CD8-positive, alpha-beta T cell (primary cell): ENCODE measurements at regions of chr5 and their contacts with region 1.

Region 1: GRCh38 chr5:151164686-151165392 is 7.3 kb upstream of the ANXA6 start:
- DNase-seq: peak; percentile 62 to 90 (median 81)
- ATAC-seq: peak; percentile 96
- H3K4me3 ChIP-seq: no peak overlapping the region
- H3K4me3 Mint-ChIP-seq: no peak overlapping the region
- H3K27ac ChIP-seq: no peak overlapping the region
- H3K27ac Mint-ChIP-seq: no peak overlapping the region
- H3K4me1 ChIP-seq: peaks cover 10% of the 10 kb centered on the region
- H3K4me1 Mint-ChIP-seq: peaks cover 30% of the 10 kb centered on the region
- H3K27me3 ChIP-seq: no peaks in the 10 kb centered on the region
- H3K27me3 Mint-ChIP-seq: no peaks in the 10 kb centered on the region
- CTCF ChIP-seq: peak; percentile 92

Region 2: GRCh38 chr5:151037561-151038411 is 127.1 kb before region 1 on chr5:
- CTCF ChIA-PET with region 1: interaction called, 11 read pairs
- POLR2A ChIA-PET with region 1: no interaction called
- intact Hi-C with region 1: no loop called
- DNase-seq: no peak
- ATAC-seq: no peak
- H3K4me3 ChIP-seq: no peak overlapping the region
- H3K4me3 Mint-ChIP-seq: no peak overlapping the region
- H3K27ac ChIP-seq: no peak overlapping the region
- H3K27ac Mint-ChIP-seq: no peak overlapping the region
- H3K4me1 ChIP-seq: no peaks in the 10 kb centered on the region
- H3K4me1 Mint-ChIP-seq: no peaks in the 10 kb centered on the region
- H3K27me3 ChIP-seq: no peaks in the 10 kb centered on the region
- H3K27me3 Mint-ChIP-seq: no peaks in the 10 kb centered on the region
- CTCF ChIP-seq: no peak

Region 3: GRCh38 chr5:151126199-151126645 is 38.6 kb before region 1 on chr5:
- CTCF ChIA-PET with region 1: interaction called, 1,723 read pairs
- POLR2A ChIA-PET with region 1: interaction called, 25 read pairs
- intact Hi-C with region 1: loop called (anchors 1 kb)
- DNase-seq: peak; percentile 34 to 82 (median 66)
- ATAC-seq: peak; percentile 37
- H3K4me3 ChIP-seq: no peak overlapping the region
- H3K4me3 Mint-ChIP-seq: no peak overlapping the region
- H3K27ac ChIP-seq: peak overlapping the region; percentile 12 to 54
- H3K27ac Mint-ChIP-seq: peak overlapping the region; percentile 92
- H3K4me1 ChIP-seq: peaks cover 41% of the 10 kb centered on the region
- H3K4me1 Mint-ChIP-seq: peaks cover 54% of the 10 kb centered on the region
- H3K27me3 ChIP-seq: no peaks in the 10 kb centered on the region
- H3K27me3 Mint-ChIP-seq: no peaks in the 10 kb centered on the region
- CTCF ChIP-seq: peak; percentile 78

Region 4: GRCh38 chr5:151183451-151184245 is 18.8 kb after region 1 on chr5:
- CTCF ChIA-PET with region 1: interaction called, 11 read pairs
- POLR2A ChIA-PET with region 1: interaction called, 3 read pairs
- intact Hi-C with region 1: no loop called
- DNase-seq: no peak
- ATAC-seq: no peak
- H3K4me3 ChIP-seq: no peak overlapping the region
- H3K4me3 Mint-ChIP-seq: no peak overlapping the region
- H3K27ac ChIP-seq: no peak overlapping the region
- H3K27ac Mint-ChIP-seq: peak overlapping the region; percentile 14
- H3K4me1 ChIP-seq: no peaks in the 10 kb centered on the region
- H3K4me1 Mint-ChIP-seq: peaks cover 23% of the 10 kb centered on the region
- H3K27me3 ChIP-seq: no peaks in the 10 kb centered on the region
- H3K27me3 Mint-ChIP-seq: no peaks in the 10 kb centered on the region
- CTCF ChIP-seq: no peak

Region 5: DNA sequence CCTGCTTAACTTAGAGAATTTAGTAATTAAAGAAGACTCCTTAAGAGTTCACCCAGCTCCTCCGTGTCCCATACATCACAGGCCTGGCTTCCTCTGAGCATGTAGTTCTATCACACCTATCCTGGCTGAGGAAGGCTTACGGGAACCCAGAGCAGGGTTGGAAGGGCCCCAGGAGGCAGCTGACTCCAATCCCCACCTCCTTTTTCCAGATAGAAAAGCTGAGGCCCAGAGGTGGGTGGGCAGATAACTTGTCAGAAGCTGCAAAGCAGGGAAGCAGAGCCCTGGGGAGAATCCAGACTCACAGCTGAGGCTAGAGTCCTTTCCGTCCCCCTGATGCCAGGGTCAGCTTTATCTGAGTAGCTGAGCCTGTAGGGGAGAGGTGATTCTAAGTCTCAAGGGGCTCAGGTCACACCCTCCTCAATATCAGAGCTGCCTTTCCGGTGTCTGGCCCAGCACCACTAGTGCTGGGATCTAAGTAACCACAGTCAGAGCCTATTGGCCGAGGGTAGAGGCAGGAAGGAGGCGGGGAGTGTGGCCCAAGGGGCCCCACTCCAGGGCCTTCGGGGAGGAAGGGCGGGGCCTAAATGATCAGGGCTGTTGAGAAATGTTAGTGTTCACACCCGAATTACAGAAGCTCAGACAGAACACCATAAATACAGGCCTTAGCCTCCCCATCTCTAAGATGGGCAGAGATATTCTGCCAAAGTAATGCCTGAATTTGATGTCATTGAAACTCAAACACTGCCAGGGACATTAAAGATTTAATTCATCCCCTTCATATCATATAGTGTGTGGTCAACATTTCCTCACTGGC is 49.2 kb after region 1 on chr5:
- CTCF ChIA-PET with region 1: interaction called, 21 read pairs
- POLR2A ChIA-PET with region 1: interaction called, 8 read pairs
- intact Hi-C with region 1: no loop called
- DNase-seq: peak; percentile 67 to 95 (median 89)
- ATAC-seq: peak; percentile 80
- H3K4me3 ChIP-seq: peak overlapping the region; percentile 57 to 61
- H3K4me3 Mint-ChIP-seq: peak overlapping the region; percentile 83
- H3K27ac ChIP-seq: peak overlapping the region; percentile 70 to 86
- H3K27ac Mint-ChIP-seq: peak overlapping the region; percentile 96
- H3K4me1 ChIP-seq: peaks cover 91% of the 10 kb centered on the region
- H3K4me1 Mint-ChIP-seq: peaks cover 86% of the 10 kb centered on the region
- H3K27me3 ChIP-seq: no peaks in the 10 kb centered on the region
- H3K27me3 Mint-ChIP-seq: no peaks in the 10 kb centered on the region
- CTCF ChIP-seq: no peak

Region 6: DNA sequence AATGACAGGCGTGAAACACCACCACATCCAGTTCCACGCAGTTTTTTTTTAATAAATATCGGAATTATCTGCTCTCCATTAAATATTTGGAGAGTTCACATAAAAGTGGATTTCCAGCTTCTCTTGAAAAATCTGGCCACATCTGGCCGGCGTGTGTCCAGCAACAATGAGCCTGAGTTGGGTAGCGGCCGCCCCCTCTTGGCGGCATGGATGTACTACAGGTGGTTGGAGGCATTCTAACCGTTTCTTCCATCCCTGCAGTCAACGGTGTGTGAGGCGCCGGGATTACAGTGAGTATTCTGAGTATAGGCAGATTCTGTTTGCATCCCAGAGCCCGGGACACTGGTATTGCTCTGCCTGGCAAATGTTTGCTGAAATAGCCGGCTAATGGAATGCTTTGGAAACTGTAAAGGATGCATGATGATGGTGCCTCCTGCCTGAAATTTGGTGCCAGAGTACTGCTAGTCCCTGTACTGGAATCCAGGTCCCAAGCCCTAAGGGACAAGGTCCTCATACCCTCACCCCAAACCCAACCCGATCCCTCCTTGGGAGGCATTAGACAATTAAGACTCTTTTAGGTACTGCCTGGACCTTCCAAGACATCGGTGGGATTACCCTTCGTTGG is 74.5 kb after region 1 on chr5:
- CTCF ChIA-PET with region 1: interaction called, 169 read pairs
- POLR2A ChIA-PET with region 1: interaction called, 4 read pairs
- intact Hi-C with region 1: loop called (anchors 2 kb)
- DNase-seq: peak in 8 of 9 experiments; percentile 38 to 77 (median 63)
- ATAC-seq: peak; percentile 87
- H3K4me3 ChIP-seq: no peak overlapping the region
- H3K4me3 Mint-ChIP-seq: peak overlapping the region; percentile 57
- H3K27ac ChIP-seq: no peak overlapping the region
- H3K27ac Mint-ChIP-seq: no peak overlapping the region
- H3K4me1 ChIP-seq: peaks cover 23% of the 10 kb centered on the region
- H3K4me1 Mint-ChIP-seq: peaks cover 38% of the 10 kb centered on the region
- H3K27me3 ChIP-seq: no peaks in the 10 kb centered on the region
- H3K27me3 Mint-ChIP-seq: no peaks in the 10 kb centered on the region
- CTCF ChIP-seq: peak; percentile 100

Region 7: DNA sequence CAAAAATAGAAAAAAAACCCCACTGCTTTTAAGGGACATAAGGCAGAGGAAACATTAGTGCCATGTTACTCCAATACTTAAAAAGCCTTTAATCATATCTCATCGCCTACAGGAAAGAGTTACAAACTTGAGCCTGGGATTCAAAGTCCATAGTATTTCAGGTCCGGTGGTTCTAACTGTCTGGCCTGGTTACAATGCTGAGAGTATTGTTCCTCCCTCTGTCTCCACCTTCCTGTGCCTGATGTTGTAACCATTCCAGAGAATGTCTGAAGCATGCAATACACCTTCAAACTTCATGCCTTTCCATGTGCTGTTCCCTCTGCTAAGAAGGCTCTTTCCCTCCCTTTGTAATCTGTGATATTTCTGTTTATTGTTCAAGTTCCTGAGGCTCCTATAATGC is 224.1 kb after region 1 on chr5:
- CTCF ChIA-PET with region 1: no interaction called
- POLR2A ChIA-PET with region 1: no interaction called
- intact Hi-C with region 1: no loop called
- DNase-seq: no peak
- ATAC-seq: no peak
- H3K4me3 ChIP-seq: no peak overlapping the region
- H3K4me3 Mint-ChIP-seq: no peak overlapping the region
- H3K27ac ChIP-seq: no peak overlapping the region
- H3K27ac Mint-ChIP-seq: no peak overlapping the region
- H3K4me1 ChIP-seq: no peaks in the 10 kb centered on the region
- H3K4me1 Mint-ChIP-seq: no peaks in the 10 kb centered on the region
- H3K27me3 ChIP-seq: no peaks in the 10 kb centered on the region
- H3K27me3 Mint-ChIP-seq: peaks cover 22% of the 10 kb centered on the region
- CTCF ChIP-seq: no peak